ENCODE measurements at regions of chr3 and their contacts with region 1.

Region 1: GRCh38 chr3:31550452-31551251 is 17.9 kb downstream of the STT3B start:
- DNase-seq: peak in 4 of 42 donors; percentile 20 to 37 (median 22)

Region 2: DNA sequence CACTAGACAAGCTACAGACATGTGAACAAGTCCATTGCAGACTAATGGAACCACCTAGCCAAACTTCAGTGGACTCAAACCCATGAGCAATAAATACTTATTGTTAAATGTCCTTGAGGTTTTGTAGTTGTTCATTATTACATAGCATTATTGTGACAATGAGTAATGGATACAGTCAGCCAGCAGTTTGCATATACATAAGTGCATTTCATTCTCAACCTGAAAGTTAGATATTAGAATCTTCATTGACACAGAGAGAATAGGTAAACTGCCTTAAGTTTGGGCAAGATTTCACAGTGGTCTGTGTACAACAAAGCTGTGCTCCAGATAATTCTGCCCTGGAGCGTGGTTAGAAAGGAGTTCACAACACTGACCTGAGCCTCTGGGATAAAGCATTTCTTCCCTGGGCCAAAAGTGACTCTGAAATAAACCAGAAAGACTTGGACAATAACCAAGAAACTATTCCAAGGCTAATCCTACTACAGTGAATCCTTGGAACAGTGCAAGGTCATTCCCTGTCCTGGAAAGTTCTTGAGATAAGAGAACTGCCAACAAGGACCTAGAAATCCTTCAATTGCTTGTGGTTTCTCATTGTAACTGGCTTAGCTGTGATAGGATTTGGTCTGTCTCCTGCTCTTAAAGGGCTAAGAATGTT is 243.4 kb before region 1 on chr3:
- intact Hi-C with region 1: no loop called
- DNase-seq: no peak

Region 3: GRCh38 chr3:31768479-31769123 is 217.9 kb after region 1 on chr3:
- intact Hi-C with region 1: loop called (anchors 10 kb)
- DNase-seq: peak in 38 of 42 donors; percentile 9 to 83 (median 54)